ENCODE measurements at regions of chr21 and their contacts with region 1.

Region 1: DNA sequence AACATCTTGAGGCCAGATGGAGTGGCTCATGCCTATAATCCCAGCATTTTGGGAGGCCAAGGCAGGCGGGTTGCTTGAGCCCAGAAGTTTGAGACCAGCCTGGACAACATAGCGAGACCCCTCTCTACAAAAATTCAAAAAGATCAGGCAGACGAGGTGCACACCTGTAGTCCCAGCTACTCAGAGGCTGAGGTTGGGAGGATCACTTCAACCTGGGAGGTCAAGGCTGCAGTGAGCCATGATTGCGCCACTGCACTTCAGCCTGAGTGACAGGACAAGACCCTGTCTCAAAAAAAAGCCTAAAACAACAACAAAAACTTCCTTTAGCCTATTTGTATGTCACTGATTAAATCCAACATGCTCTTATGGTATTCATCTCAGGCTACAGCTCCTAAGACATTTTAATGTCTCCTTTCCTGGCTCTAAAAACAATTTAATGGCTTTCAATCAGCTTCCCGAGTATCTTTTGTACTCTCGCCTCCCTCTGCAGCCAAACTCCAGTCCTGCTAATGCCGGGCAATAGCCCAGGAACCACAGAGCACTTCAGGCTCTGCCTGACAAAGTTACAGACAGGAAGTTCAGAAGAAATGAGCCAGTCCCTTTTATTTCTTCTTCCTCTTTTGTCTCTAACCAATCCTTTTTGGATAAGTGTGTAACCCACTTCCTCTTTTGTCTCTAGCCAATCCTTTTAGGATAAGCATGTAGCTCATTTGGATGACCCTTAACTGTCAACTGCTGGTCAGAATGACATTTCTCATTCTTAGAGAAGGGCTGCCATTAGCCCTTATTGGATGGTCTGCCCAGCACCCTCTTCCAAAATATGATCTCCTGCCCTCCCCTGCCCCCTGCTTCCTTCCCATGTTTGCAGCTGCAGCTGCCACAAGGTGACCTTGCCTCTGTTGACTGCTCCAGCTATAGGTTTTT is 6.6 kb upstream of the DOP1B start:
- DNase-seq: no peak
- ATAC-seq: peak in 3 of 4 donors; percentile 40 to 74 (median 67)
- H3K4me3 ChIP-seq: no peak overlapping the region
- H3K27ac ChIP-seq: peak overlapping the region in 2 of 4 donors; percentile 30 to 55
- H3K4me1 ChIP-seq: peaks cover 0 to 3% (median 0%) of the 10 kb centered on the region in 3 donors
- H3K27me3 ChIP-seq: no peaks in the 10 kb centered on the region
- CTCF ChIP-seq: no peak

Region 2: DNA sequence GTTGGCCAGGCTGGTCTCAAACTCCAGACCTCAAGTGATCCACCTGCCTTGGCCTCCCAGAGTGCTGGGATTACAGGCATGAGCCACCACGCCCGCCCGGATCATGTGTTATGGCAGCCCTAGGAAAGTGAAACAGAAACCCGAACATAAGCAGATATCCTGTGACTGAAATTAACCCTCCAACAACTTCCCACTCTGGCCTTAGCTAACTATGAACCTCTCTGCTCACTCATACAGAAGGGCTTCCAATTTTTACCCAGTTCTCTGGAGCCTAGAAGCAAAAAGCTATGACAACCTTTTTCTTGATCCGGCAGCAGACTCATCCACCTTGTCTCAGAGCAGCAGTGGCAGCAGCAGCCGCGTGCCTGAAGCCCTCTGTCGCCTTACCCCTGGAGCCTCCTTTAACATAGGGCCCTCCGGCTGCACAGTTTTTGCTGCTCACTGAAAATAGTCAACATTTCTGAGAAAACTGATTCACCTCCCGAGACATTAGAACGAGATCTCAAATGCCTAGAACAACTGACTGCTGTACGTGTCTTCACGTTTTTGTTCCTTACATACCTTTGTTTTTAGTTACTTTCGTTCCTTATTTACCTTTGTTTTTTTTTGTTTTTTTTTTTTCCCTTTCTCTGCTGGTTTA is 70.9 kb before region 1 on chr21:
- intact Hi-C with region 1: no loop called
- DNase-seq: no peak
- ATAC-seq: peak in 2 of 4 donors; percentile 74 to 82
- H3K4me3 ChIP-seq: no peak overlapping the region
- H3K27ac ChIP-seq: no peak overlapping the region
- H3K4me1 ChIP-seq: no peaks in the 10 kb centered on the region
- H3K27me3 ChIP-seq: no peaks in the 10 kb centered on the region
- CTCF ChIP-seq: no peak

Region 3: DNA sequence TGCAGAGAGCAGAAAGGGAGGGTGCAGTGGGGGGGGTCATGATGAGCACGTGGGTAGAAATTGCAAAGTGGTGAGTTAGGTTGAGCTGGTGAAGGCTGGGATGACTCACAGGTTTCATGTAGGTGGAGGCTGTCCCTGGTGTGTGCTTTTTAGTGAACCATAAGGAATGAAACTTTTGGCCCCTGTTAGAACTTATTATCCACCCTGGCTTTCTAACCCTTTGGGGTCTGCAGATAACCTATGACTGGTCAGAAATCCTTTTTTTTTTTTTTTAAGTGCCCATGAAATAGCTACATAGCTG is 53.5 kb after region 1 on chr21:
- intact Hi-C with region 1: loop called in 2 of 3 experiments (anchors 5 kb)
- DNase-seq: peak in 3 of 6 donors; percentile 33 to 64 (median 48)
- ATAC-seq: peak; percentile 76 to 85 (median 84)
- H3K4me3 ChIP-seq: no peak overlapping the region
- H3K27ac ChIP-seq: peak overlapping the region; percentile 25 to 47 (median 35)
- H3K4me1 ChIP-seq: peaks cover 15 to 19% (median 16%) of the 10 kb centered on the region in 3 donors
- H3K27me3 ChIP-seq: no peaks in the 10 kb centered on the region
- CTCF ChIP-seq: no peak

Region 4: GRCh38 chr21:36209626-36210171 is 59.6 kb after region 1 on chr21:
- intact Hi-C with region 1: loop called in 2 of 3 experiments (anchors 5 kb)
- DNase-seq: peak in 4 of 6 donors; percentile 53 to 71 (median 60)
- ATAC-seq: peak; percentile 79 to 91 (median 89)
- H3K4me3 ChIP-seq: no peak overlapping the region
- H3K27ac ChIP-seq: no peak overlapping the region
- H3K4me1 ChIP-seq: peaks cover 0 to 2% (median 0%) of the 10 kb centered on the region in 3 donors
- H3K27me3 ChIP-seq: no peaks in the 10 kb centered on the region
- CTCF ChIP-seq: peak in 3 of 4 donors; percentile 12 to 40 (median 30)